ENCODE measurements at regions of chr7 and their contacts with region 1.

Region 1: GRCh38 chr7:36291387-36292316 is 98.0 kb upstream of the ANLN start:
- DNase-seq: peak; percentile 81 to 87
- ATAC-seq: peak; percentile 81 to 89
- H3K4me3 ChIP-seq: peak overlapping the region; percentile 18; the same call in 1 of the 3 replicates
- H3K27ac ChIP-seq: peak overlapping the region; percentile 82 to 91
- H3K4me1 ChIP-seq: peaks cover 54% of the 10 kb centered on the region
- CTCF ChIP-seq: peak; percentile 98
- EP300 ChIP-seq: no peak
- POLR2A ChIP-seq: no peak
- RAD21 ChIP-seq: peak; percentile 100

Region 2: GRCh38 chr7:35993676-35994606 is 297.7 kb before region 1 on chr7:
- CTCF ChIA-PET with region 1: interaction called, 12 read pairs
- POLR2A ChIA-PET with region 1: no interaction called
- DNase-seq: peak in 1 of 2 experiments; percentile 81
- ATAC-seq: peak; percentile 86 to 88
- H3K4me3 ChIP-seq: no peak overlapping the region
- H3K27ac ChIP-seq: peak overlapping the region; percentile 47 to 56; a peak in 5 of 6 replicates
- H3K4me1 ChIP-seq: peaks cover 21% of the 10 kb centered on the region
- CTCF ChIP-seq: no peak
- EP300 ChIP-seq: no peak
- POLR2A ChIP-seq: no peak
- RAD21 ChIP-seq: no peak; a peak in 1 of 5 replicates

Region 3: GRCh38 chr7:36048141-36048901 is 243.3 kb before region 1 on chr7:
- CTCF ChIA-PET with region 1: interaction called, 11 read pairs
- POLR2A ChIA-PET with region 1: no interaction called
- DNase-seq: no peak
- ATAC-seq: peak in 1 of 2 experiments; percentile 25; a peak in 1 of 6 replicates
- H3K4me3 ChIP-seq: no peak overlapping the region
- H3K27ac ChIP-seq: peak overlapping the region in 1 of 2 experiments; percentile 26; a peak in 1 of 6 replicates
- H3K4me1 ChIP-seq: peaks cover 10% of the 10 kb centered on the region; the same call in 2 of the 3 replicates
- CTCF ChIP-seq: no peak
- EP300 ChIP-seq: 0 out of 5 replicates have a peak, but pooled peaks of 1 of the 2 experiments have one; percentile 18
- POLR2A ChIP-seq: no peak
- RAD21 ChIP-seq: no peak

Region 4: DNA sequence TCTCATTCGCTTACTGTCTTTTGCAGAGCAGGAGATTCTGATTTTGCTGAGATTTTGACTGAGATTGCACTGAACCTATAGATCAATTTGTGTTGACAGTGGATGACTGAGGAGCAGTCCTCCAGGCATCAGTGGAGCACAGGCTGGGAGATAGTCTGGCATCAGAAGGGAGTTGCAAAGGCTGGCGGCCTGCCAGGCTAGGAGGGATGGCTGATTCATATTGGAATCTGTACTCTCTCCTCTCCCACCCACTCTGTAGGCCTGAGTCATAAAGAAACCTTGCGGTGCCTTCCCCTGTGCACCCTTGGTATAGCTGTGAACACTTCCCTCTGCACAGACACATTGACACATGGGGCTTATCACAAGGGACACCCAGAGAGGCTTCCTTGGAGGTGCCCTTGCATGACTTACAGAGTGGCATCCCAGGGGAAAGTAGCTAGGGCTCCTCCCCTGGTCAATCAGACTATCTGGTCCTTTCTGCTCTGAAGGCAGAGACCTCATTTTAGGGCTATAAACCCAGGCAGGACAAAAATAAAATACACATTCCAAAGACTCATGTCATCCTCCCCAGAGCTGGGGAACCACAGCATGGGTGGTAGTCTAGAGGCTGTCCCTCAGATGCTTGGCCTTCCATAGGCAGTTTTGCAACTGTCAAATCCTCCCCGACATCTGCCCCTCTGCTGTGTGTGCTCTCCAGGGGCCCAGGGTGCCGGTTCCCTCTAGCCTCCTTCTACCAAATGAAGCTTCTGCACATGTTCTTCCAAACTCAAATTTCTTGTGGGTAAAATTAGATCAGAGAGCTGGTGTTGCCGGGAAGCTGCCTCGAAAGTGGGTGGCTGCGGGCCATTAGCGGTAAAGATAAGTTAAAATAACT is 176.0 kb before region 1 on chr7:
- CTCF ChIA-PET with region 1: interaction called, 10 read pairs
- POLR2A ChIA-PET with region 1: interaction called, 4 read pairs
- DNase-seq: peak; percentile 84 to 95
- ATAC-seq: peak; percentile 97 to 98
- H3K4me3 ChIP-seq: no peak overlapping the region
- H3K27ac ChIP-seq: peak overlapping the region; percentile 82 to 88
- H3K4me1 ChIP-seq: peaks cover 55% of the 10 kb centered on the region
- CTCF ChIP-seq: no peak
- EP300 ChIP-seq: peak; percentile 71 to 73; a peak in 2 of 5 replicates
- POLR2A ChIP-seq: no peak
- RAD21 ChIP-seq: peak; percentile 29 to 56; a peak in 4 of 5 replicates

Region 5: DNA sequence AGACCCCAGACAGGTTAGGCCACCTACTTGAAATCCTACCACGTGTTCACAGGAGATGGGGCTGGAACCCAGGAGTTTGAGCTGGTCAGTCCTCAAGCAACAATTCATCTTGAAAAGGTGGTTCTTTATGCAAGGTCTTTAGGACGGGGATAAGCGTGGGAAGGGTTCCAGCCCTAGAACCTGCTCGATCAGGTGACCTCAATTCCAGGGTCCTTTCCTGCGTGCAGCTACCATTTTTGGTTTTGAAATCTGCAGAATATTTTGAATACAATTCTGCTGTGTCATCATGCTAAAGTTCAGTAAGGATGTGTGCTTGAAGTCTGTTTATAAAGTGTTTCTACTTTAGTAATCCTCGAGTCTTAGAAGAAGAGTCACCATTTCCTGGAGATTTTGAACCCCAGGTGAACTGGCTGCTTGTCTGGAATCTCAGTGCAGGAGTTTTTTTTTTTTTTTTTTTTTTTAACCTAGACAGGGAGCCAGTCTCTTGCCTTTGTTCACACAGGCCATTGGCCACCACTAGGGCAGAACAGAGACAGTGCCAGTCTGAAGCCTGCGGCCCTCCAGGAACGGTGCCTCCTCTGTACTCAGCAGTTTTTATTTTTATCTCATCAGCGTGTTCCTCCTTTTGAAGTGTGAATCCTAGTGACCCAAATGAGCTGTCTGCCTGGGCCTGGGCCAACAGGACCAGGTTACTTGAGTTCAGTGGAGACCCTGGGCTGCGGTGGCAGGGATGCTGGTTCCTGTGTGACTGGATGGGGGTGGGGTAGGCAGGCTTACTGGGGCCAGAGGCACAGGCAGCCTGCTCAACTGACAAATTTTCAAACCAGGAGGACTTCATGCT is 84.0 kb before region 1 on chr7:
- CTCF ChIA-PET with region 1: interaction called, 20 read pairs
- POLR2A ChIA-PET with region 1: interaction called, 5 read pairs
- DNase-seq: peak; percentile 71 to 90
- ATAC-seq: peak; percentile 86 to 92
- H3K4me3 ChIP-seq: no peak overlapping the region
- H3K27ac ChIP-seq: peak overlapping the region; percentile 87 to 88
- H3K4me1 ChIP-seq: peaks cover 80% of the 10 kb centered on the region
- CTCF ChIP-seq: no peak
- EP300 ChIP-seq: peak; percentile 57 to 81; a peak in 3 of 5 replicates
- POLR2A ChIP-seq: no peak
- RAD21 ChIP-seq: peak; percentile 22 to 25; a peak in 2 of 5 replicates

Region 6: DNA sequence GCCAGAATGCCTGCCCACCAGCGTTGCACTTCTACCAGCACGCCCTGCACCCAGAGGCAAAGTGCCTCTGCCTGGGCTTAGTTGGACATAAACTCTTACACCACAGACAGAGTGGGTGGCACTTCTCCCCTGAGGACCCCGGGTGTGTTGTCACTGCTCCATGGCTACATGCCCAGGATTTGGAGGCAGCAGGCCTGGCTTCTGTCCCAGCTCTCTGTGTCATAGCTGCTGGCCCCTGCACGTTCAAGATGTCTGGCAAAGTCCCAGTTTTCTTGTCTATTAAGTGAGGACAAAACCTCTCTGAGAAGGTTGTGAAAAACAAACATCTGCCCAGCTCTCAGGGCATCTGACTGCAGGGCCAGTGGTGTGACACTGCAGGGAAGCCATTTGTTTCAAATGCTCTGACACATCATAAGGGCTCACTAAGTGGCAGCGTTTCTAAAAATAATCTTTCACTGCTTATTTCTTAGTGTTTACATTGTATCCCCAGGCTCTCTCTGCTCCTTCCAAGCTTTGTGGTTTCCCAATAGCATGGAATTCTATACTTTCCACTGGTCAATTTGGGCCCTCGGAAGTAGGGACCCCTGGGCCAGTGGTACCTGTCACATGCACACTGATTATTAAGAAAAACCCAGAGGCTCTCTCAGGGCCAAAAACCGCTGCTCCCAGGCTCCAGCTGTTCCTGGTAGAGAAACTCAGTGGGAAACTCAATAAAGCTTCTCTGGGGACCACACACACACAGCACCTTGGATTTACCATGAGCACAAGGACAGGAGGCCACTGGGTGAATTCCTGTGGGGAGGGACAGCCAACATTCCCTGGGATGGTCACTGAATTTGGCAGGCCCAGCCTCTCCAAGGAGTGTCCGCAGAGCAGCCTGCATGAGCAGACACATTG is 11.8 kb after region 1 on chr7:
- CTCF ChIA-PET with region 1: interaction called, 41 read pairs
- POLR2A ChIA-PET with region 1: no interaction called
- DNase-seq: peak; percentile 66 to 87
- ATAC-seq: peak; percentile 70 to 81
- H3K4me3 ChIP-seq: no peak overlapping the region
- H3K27ac ChIP-seq: peak overlapping the region; percentile 54 to 67
- H3K4me1 ChIP-seq: peaks cover 35% of the 10 kb centered on the region
- CTCF ChIP-seq: no peak
- EP300 ChIP-seq: peak; percentile 21 to 74; a peak in 3 of 5 replicates
- POLR2A ChIP-seq: no peak
- RAD21 ChIP-seq: no peak

Region 7: DNA sequence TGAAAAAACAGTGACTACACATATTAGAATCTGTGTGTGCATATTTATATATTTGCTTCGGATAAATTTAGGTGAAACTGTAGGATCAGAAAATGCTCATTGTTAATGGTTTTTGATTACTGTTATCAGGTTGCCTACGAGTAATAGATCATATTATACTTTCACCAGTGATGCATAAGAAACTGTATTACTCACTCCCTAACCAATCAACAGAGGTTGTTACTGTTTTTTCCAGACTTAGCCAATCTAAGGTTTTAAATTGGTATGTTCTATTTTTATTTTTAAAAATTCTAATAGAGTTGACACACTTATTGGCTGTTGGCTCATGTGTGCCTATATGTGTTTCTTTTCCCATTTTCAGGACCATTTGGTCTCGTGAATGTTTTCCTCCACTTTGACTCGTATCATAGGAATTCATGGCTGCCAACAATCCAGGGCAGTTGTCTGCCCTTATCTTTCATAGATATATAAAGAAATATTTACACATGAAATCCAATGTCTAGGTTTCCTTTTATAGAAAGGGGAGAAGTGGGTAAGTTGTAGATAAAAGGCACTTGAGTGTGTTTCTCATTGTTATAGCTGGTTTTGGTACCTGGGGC is 157.2 kb after region 1 on chr7:
- CTCF ChIA-PET with region 1: no interaction called
- POLR2A ChIA-PET with region 1: no interaction called
- DNase-seq: no peak
- ATAC-seq: peak in 1 of 2 experiments; percentile 59; a peak in 3 of 6 replicates
- H3K4me3 ChIP-seq: no peak overlapping the region
- H3K27ac ChIP-seq: no peak overlapping the region
- H3K4me1 ChIP-seq: peaks cover 15% of the 10 kb centered on the region
- CTCF ChIP-seq: no peak
- EP300 ChIP-seq: no peak
- POLR2A ChIP-seq: no peak
- RAD21 ChIP-seq: no peak